Activated naive CD4-positive, alpha-beta T cell treated with anti-CD3 and anti-CD28 coated beads for 36 hours (primary cell): ENCODE measurements at regions of chr6 and their contacts with region 1.

Region 1: GRCh38 chr6:156953479-156954146 is 176.4 kb downstream of the ARID1B start:
- DNase-seq: peak; percentile 61
- H3K4me3 Mint-ChIP-seq: no peak overlapping the region
- H3K27ac Mint-ChIP-seq: no peak overlapping the region
- H3K4me1 Mint-ChIP-seq: peaks cover 52% of the 10 kb centered on the region
- H3K27me3 Mint-ChIP-seq: no peaks in the 10 kb centered on the region

Region 2: DNA sequence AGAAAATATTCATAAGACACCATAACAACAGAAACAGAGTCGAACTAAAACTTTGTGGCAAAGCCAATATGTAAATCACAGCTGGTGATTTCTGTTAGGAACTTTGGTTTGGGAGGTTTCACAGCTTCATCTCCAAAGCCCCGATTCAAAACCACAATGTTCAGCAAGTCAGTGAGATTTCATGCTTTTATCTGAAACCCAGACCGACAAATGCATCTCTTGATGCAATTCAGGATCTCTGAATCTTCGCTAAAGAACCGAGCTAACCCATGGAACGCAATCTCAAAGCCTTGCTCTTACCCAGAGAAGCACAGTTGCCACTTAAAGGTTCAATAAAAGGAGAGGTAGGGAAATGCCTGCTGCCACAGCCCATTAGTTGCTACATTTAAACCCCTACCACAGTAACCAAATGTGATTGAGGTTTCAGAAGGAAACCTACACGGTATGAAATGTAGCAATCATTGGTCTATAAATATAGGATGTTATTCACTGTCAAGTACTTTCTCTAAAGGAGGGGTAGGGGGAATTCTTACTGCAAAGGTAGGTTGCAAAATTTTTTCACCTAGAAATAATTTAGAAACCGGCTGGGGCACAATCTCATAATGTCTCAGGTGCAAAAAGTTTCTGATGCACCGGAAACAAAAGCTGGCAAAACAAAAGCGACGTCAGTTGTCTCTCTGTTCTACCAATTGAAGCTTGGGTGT is 557.4 kb before region 1 on chr6:
- CTCF ChIA-PET with region 1: no interaction called
- intact Hi-C with region 1: loop called (anchors 10 kb)
- DNase-seq: peak; percentile 62
- H3K4me3 Mint-ChIP-seq: peak overlapping the region; percentile 57
- H3K27ac Mint-ChIP-seq: peak overlapping the region; percentile 77
- H3K4me1 Mint-ChIP-seq: peaks cover 82% of the 10 kb centered on the region
- H3K27me3 Mint-ChIP-seq: peaks cover 6% of the 10 kb centered on the region

Region 3: GRCh38 chr6:156686995-156687788 is 266.4 kb before region 1 on chr6:
- CTCF ChIA-PET with region 1: no interaction called
- intact Hi-C with region 1: loop called (anchors 2 kb)
- DNase-seq: peak; percentile 63
- H3K4me3 Mint-ChIP-seq: peak overlapping the region; percentile 82
- H3K27ac Mint-ChIP-seq: peak overlapping the region; percentile 91
- H3K4me1 Mint-ChIP-seq: peaks cover 32% of the 10 kb centered on the region
- H3K27me3 Mint-ChIP-seq: no peaks in the 10 kb centered on the region

Region 4: DNA sequence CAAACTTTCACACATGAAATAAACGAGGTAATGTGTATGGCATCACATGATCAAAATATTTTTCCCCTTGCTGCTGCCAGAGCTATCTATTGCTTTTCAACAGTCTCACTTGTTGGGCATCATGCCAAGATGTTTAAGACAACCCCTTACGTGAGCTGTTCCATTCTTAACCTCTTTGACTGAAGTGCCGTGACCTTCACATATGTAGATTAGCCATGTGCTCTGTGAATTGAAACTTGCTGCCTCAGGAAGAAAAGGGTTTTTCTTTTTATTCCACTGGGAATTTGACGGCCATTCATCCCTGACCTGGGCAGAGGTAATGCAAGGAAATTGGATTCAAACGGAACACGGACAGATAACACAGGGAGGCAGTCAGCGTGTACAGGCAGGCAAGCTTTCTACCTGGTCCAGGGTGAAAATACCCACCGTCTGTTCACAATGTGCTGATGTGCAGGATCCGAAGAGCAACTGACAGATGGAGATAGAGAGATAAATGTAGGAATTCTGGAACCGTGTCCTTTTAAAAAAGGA is 162.2 kb before region 1 on chr6:
- CTCF ChIA-PET with region 1: no interaction called
- intact Hi-C with region 1: loop called (anchors 1 kb)
- DNase-seq: peak; percentile 60
- H3K4me3 Mint-ChIP-seq: no peak overlapping the region
- H3K27ac Mint-ChIP-seq: peak overlapping the region; percentile 48
- H3K4me1 Mint-ChIP-seq: peaks cover 89% of the 10 kb centered on the region
- H3K27me3 Mint-ChIP-seq: no peaks in the 10 kb centered on the region

Region 5: DNA sequence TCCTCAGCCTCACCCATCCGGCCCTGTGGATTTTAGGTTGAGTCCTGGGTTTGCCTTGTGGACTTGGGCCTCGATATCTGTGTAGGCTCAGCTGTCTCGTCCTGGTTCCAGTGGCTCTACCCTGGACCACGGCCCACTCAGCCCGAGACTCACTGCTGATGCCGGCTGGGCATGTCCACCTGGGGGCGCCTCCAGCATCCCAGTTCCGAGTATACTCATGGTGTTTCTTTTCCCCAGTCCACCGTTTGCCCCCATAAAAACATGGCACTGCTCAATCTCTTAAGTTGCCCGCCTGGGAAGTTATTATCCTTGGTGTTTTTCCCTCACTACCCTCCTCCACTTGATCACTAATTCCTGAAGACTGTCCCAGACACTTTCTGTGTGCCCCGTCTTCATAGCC is 77.3 kb before region 1 on chr6:
- CTCF ChIA-PET with region 1: no interaction called
- intact Hi-C with region 1: loop called (anchors 5 kb)
- DNase-seq: peak; percentile 19
- H3K4me3 Mint-ChIP-seq: no peak overlapping the region
- H3K27ac Mint-ChIP-seq: no peak overlapping the region
- H3K4me1 Mint-ChIP-seq: peaks cover 57% of the 10 kb centered on the region
- H3K27me3 Mint-ChIP-seq: no peaks in the 10 kb centered on the region

Region 6: GRCh38 chr6:156976216-156977127 is 22.9 kb after region 1 on chr6:
- CTCF ChIA-PET with region 1: interaction called, 4 read pairs
- intact Hi-C with region 1: loop called (anchors 1 kb)
- DNase-seq: peak; percentile 48
- H3K4me3 Mint-ChIP-seq: peak overlapping the region; percentile 67
- H3K27ac Mint-ChIP-seq: peak overlapping the region; percentile 63
- H3K4me1 Mint-ChIP-seq: peaks cover 78% of the 10 kb centered on the region
- H3K27me3 Mint-ChIP-seq: no peaks in the 10 kb centered on the region

Region 7: GRCh38 chr6:157054531-157054979 is 100.9 kb after region 1 on chr6:
- CTCF ChIA-PET with region 1: no interaction called
- intact Hi-C with region 1: loop called (anchors 1 kb)
- DNase-seq: peak; percentile 67
- H3K4me3 Mint-ChIP-seq: peak overlapping the region; percentile 29
- H3K27ac Mint-ChIP-seq: peak overlapping the region; percentile 94
- H3K4me1 Mint-ChIP-seq: peaks cover 43% of the 10 kb centered on the region
- H3K27me3 Mint-ChIP-seq: no peaks in the 10 kb centered on the region

Region 8: DNA sequence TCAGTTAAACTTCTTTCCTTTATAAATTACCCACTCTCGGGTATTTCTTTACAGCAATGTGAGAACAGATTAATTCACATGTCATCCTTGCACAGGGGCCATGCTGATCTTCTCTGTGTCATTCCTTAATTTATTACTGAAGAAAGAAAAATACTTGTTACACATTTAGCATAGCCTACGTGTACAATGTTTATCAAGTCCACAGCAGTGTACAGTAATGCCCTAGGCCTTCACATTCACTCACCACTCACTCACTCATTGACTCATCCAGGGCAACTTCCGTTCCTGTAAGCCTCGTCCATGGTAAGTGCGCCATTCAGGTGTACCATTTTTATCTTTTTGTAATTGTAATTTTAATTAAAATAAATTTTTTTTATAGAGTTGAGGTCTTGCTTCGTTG is 1972.8 kb after region 1 on chr6:
- CTCF ChIA-PET with region 1: no interaction called
- intact Hi-C with region 1: no loop called
- DNase-seq: no peak
- H3K4me3 Mint-ChIP-seq: no peak overlapping the region
- H3K27ac Mint-ChIP-seq: no peak overlapping the region
- H3K4me1 Mint-ChIP-seq: no peaks in the 10 kb centered on the region
- H3K27me3 Mint-ChIP-seq: no peaks in the 10 kb centered on the region